SK-N-SH (cell line): ENCODE measurements at regions of chr17 and their contacts with region 1.

Region 1: DNA sequence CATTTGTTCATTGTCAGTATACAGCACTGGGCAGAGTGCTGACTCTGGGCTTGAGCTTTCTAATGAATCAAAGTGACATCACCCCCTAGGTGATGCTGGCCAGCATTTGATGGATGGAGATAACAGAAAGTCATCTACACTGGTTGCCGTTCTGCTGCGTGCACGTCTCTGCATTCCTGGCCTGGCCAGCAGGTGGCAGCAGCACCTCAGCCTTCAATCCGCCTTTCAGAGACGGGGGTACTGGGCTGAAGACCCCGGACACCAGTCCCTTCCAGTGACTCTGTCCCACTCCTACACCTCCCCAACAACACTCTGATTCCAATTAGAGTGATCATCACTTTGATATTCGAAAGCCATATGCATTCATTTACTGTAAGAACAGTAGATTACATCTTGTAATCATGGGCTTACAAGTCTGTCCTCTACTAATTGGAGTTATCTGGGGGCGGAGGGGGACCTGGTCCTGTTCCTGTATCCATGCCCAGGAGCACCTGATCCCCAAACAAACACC is 6.0 kb downstream of the CPSF4L start:
- DNase-seq: peak; percentile 91
- H3K4me3 ChIP-seq: no peak overlapping the region
- H3K27ac ChIP-seq: peak overlapping the region in 1 of 2 experiments; percentile 47; a peak in 2 of 4 replicates
- H3K4me1 ChIP-seq: peaks cover 0 to 14% of the 10 kb centered on the region in 2 experiments; a peak in 1 of 4 replicates
- H3K27me3 ChIP-seq: no peaks in the 10 kb centered on the region
- CTCF ChIP-seq: peak; percentile 100
- EP300 ChIP-seq: peak in 1 of 2 experiments; percentile 94; a peak in 2 of 4 replicates
- RAD21 ChIP-seq: peak; percentile 100

Region 2: GRCh38 chr17:72978583-72979218 is 277.0 kb before region 1 on chr17:
- CTCF ChIA-PET with region 1: no interaction called
- POLR2A ChIA-PET with region 1: no interaction called
- DNase-seq: peak; percentile 51
- H3K4me3 ChIP-seq: no peak overlapping the region
- H3K27ac ChIP-seq: peak overlapping the region in 1 of 2 experiments; percentile 86; a peak in 1 of 4 replicates
- H3K4me1 ChIP-seq: peaks cover 6 to 28% of the 10 kb centered on the region in 2 experiments; a peak in 3 of 4 replicates
- H3K27me3 ChIP-seq: no peaks in the 10 kb centered on the region
- CTCF ChIP-seq: no peak
- EP300 ChIP-seq: no peak
- RAD21 ChIP-seq: no peak

Region 3: DNA sequence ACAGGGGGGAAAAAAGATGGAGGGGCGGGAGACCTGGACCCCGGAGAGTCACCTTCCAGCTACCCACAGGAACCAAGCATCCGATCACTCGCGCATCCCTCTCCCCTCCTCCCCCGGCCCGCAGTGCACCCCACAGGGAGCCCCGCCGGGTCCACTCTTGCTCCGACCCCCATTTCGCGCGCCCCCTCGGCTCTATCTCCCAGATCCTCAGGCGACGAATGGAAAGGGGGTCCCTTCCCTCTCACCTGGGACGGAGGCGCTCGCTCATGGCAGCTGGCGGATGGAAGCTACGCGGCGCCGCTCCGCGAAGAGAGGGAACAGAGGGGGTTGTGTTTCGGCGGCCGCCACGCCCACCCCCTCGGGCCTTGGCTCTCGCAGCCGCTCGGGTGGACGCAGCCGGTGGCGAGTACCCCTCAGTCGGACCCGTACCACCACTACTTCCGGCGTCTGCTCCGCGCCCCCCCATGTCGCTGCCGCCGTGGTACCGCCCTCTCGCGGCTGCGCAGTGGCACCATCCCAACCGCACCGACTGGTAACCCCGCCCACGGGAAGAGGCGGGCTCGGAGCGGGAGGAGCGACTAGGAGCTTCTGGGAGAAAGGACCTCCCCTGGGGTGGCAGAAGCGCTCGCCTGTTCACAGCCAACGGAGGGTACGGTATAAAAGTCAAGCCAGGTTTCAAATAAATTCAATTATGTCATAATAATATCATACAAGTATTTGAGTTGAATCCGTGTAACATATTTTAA is 23.7 kb before region 1 on chr17:
- CTCF ChIA-PET with region 1: interaction called, 19 read pairs
- POLR2A ChIA-PET with region 1: interaction called, 5 read pairs
- DNase-seq: peak; percentile 100
- H3K4me3 ChIP-seq: peak overlapping the region; percentile 97 to 98
- H3K27ac ChIP-seq: peak overlapping the region; percentile 59 to 87
- H3K4me1 ChIP-seq: peaks cover 24 to 29% of the 10 kb centered on the region in 2 experiments
- H3K27me3 ChIP-seq: no peaks in the 10 kb centered on the region
- CTCF ChIP-seq: peak; percentile 10; the same call in 1 of the 2 replicates
- EP300 ChIP-seq: peak in 1 of 2 experiments; percentile 47; a peak in 2 of 4 replicates
- RAD21 ChIP-seq: 0 out of 2 replicates have a peak, but pooled peaks have one; percentile 24

Region 4: DNA sequence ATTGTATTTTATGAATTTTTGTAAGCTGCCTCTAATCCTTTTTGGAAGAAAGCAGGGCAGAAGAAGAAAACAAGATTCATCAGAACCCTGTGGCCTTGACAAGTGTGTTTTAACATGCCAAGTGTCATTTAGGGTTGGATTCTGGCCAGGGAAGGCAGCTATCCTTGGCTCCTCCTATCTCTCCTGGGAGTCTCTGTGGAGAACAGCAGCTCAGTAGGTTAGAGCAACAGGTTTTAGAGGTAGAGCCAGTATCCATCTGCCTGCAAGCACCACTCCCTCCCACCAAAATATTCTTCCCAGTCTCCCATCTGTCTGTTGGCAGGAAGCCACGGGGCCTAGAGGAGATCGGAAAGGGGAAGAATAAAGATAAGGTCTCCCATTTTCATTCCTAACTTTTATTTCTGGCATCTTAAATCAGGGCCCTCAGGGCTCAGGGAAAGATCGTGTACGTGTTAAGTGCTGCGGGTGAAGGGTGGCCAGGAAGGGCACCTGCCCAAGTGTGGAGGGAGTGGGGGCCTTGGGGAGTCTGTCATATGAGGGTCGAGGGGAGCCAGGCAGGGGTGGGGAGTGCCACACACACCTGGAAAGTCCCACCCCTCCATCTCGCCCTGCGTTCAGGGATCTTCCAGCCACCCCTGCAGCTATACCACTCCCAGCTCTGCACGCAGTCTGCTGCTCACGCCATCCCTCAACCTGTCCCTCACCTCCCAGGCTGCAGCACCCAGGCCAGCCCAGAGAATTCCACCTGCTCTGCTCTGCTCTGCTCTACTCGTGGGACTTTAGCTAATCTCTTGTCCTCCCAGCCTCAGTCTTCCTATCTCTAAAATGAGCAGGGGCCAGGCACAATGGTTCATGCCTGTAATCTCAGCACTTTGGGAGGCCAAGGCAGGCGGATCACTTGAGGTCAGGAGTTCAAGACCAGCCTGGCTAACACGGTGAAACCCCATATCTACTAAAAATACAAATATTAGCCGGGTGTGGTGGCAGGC is 23.0 kb after region 1 on chr17:
- CTCF ChIA-PET with region 1: interaction called, 16 read pairs
- POLR2A ChIA-PET with region 1: no interaction called
- DNase-seq: peak; percentile 76
- H3K4me3 ChIP-seq: no peak overlapping the region
- H3K27ac ChIP-seq: no peak overlapping the region; a peak in 1 of 4 replicates
- H3K4me1 ChIP-seq: peaks cover 9 to 26% of the 10 kb centered on the region in 2 experiments
- H3K27me3 ChIP-seq: no peaks in the 10 kb centered on the region
- CTCF ChIP-seq: no peak
- EP300 ChIP-seq: peak in 1 of 2 experiments; percentile 25; a peak in 1 of 4 replicates
- RAD21 ChIP-seq: no peak

Region 5: GRCh38 chr17:73304971-73305812 is 49.5 kb after region 1 on chr17:
- CTCF ChIA-PET with region 1: interaction called, 66 read pairs
- POLR2A ChIA-PET with region 1: interaction called, 7 read pairs
- DNase-seq: no peak
- H3K4me3 ChIP-seq: peak overlapping the region; percentile 18 to 63; a peak in 3 of 4 replicates
- H3K27ac ChIP-seq: peak overlapping the region; percentile 31 to 96; a peak in 3 of 4 replicates
- H3K4me1 ChIP-seq: peaks cover 68 to 79% of the 10 kb centered on the region in 2 experiments
- H3K27me3 ChIP-seq: no peaks in the 10 kb centered on the region
- CTCF ChIP-seq: peak; percentile 55
- EP300 ChIP-seq: peak in 1 of 2 experiments; percentile 31; a peak in 1 of 4 replicates
- RAD21 ChIP-seq: peak; percentile 28; the same call in 1 of the 2 replicates

Region 6: GRCh38 chr17:73342050-73342522 is 86.4 kb after region 1 on chr17:
- CTCF ChIA-PET with region 1: interaction called, 26 read pairs
- POLR2A ChIA-PET with region 1: no interaction called
- DNase-seq: peak; percentile 69
- H3K4me3 ChIP-seq: no peak overlapping the region
- H3K27ac ChIP-seq: peak overlapping the region; percentile 70 to 92
- H3K4me1 ChIP-seq: peaks cover 23 to 42% of the 10 kb centered on the region in 2 experiments
- H3K27me3 ChIP-seq: no peaks in the 10 kb centered on the region
- CTCF ChIP-seq: no peak
- EP300 ChIP-seq: peak in 1 of 2 experiments; percentile 9; a peak in 1 of 4 replicates
- RAD21 ChIP-seq: no peak

Region 7: GRCh38 chr17:73387746-73388577 is 132.2 kb after region 1 on chr17:
- CTCF ChIA-PET with region 1: interaction called, 16 read pairs
- POLR2A ChIA-PET with region 1: no interaction called
- DNase-seq: no peak
- H3K4me3 ChIP-seq: no peak overlapping the region
- H3K27ac ChIP-seq: no peak overlapping the region
- H3K4me1 ChIP-seq: no peaks in the 10 kb centered on the region
- H3K27me3 ChIP-seq: peaks cover 33% of the 10 kb centered on the region
- CTCF ChIP-seq: no peak
- EP300 ChIP-seq: no peak
- RAD21 ChIP-seq: no peak